Panc1 (cell line): ENCODE measurements at regions of chr17 and their contacts with region 1.

Region 1: DNA sequence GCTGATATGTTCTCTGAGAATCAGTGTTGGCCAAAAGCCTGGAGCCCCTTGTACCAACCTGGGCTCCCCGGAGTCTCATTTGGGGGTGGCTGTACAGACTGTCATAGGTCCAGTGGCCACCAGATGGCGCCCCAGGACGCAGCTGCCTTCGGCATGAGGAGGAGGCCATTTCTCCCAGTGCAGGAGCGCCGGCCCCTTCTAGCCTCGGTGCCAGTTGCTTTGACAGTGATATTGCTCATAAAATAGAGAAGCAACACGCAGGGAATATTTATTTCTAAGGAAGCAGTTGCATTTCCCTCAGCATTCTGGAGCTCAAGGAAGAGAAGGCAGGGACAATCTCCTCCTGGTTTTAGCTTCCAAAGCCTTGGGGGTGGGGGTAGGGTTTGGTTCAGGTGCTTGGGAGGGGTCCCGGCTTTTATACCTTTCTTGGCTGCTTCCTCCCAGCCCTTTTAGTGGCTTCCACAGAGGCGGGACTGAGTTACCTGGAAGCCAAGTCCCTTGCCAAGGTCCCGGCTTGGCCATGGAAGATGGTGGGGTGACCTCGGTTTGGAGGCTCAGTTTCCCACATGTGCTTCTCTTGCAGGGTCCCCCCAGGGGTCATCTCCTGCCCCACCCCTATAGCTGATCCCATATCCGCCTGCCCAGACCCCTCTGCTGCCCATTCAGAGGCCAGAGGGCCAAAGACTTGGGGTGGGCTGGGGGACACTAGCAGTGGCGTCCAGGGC is 117.8 kb upstream of the CDC42EP4 start:
- DNase-seq: peak; percentile 20
- ATAC-seq: peak; percentile 93
- H3K4me3 ChIP-seq: no peak overlapping the region
- H3K27ac ChIP-seq: no peak overlapping the region
- H3K4me1 ChIP-seq: no peaks in the 10 kb centered on the region
- H3K27me3 ChIP-seq: peaks cover 5% of the 10 kb centered on the region
- CTCF ChIP-seq: peak; percentile 98

Region 2: DNA sequence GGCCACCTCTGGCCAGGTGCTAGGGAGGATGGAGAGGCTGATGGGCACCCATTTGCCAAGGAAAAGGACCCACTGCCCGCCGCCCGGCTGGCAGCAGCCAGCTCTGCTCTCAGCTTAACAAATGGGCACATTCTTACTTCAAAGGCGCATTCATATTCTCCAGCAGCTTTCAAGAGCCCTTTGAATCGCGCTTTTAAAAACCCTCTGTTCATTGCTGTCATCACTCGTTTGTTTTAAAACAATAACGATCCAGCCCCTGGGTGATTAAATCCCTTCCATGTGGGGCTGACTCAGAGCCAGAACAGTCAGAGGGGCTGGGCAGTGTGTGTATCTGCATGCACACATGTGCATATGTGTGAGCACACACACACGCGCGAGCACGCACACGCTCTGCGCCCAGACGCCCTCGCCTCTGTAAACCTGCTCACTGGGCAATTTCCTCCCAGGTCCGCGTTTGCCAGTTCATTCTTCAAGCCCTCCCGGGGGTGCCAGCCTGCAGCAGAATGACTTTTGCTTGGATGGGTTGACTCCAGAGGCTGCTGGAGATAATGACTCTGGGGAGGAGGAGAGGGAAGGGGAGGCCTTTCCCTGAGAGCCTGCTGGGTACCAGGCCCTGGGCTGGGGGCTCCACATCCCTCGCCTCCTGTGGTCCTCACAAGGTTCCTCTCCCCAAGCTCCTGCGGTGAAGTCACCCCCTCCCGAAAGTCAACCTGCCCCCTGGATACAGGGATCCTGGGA is 81.5 kb after region 1 on chr17:
- CTCF ChIA-PET with region 1: no interaction called
- POLR2A ChIA-PET with region 1: no interaction called
- in situ Hi-C with region 1: no loop called
- intact Hi-C with region 1: no loop called
- DNase-seq: no peak
- ATAC-seq: no peak
- H3K4me3 ChIP-seq: no peak overlapping the region
- H3K27ac ChIP-seq: no peak overlapping the region
- H3K4me1 ChIP-seq: no peaks in the 10 kb centered on the region
- H3K27me3 ChIP-seq: peaks cover 6% of the 10 kb centered on the region
- CTCF ChIP-seq: no peak

Region 3: GRCh38 chr17:73645050-73645978 is 215.7 kb after region 1 on chr17:
- CTCF ChIA-PET with region 1: interaction called, 3 read pairs
- POLR2A ChIA-PET with region 1: no interaction called
- in situ Hi-C with region 1: no loop called
- intact Hi-C with region 1: loop called (anchors 10 kb)
- DNase-seq: no peak
- ATAC-seq: peak; percentile 66
- H3K4me3 ChIP-seq: peak overlapping the region in 1 of 2 experiments; percentile 38; a peak in 2 of 4 replicates
- H3K27ac ChIP-seq: no peak overlapping the region
- H3K4me1 ChIP-seq: peaks cover 6% of the 10 kb centered on the region
- H3K27me3 ChIP-seq: peaks cover 45% of the 10 kb centered on the region
- CTCF ChIP-seq: peak; percentile 69

Region 4: DNA sequence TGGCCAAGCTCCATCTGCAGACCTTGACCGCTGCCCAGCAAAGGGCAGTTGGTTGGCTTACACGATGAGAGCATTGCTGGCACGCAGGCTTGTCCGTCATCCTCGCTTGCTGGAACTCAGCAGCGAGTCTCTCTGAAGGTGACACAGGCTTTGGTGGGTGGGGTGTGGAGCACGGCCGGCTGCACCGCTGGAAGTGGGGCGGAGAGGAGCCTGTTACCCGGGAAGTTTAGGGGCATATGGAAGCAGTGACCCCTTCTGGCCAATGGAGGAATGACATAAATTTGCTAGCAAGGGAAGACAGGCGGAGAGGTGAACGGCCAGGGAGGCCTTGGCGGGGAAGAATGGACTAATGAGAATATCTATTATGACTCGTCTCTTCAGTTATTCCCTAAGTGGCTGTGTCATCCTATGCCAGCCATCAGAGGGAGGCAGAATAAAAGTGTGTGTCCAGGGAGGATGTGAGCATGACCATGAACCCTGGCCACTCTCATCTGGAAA is 280.5 kb after region 1 on chr17:
- CTCF ChIA-PET with region 1: interaction called, 4 read pairs
- POLR2A ChIA-PET with region 1: no interaction called
- in situ Hi-C with region 1: no loop called
- intact Hi-C with region 1: loop called (anchors 2 kb)
- DNase-seq: peak; percentile 28
- ATAC-seq: peak; percentile 86
- H3K4me3 ChIP-seq: no peak overlapping the region
- H3K27ac ChIP-seq: no peak overlapping the region
- H3K4me1 ChIP-seq: no peaks in the 10 kb centered on the region
- H3K27me3 ChIP-seq: peaks cover 22% of the 10 kb centered on the region
- CTCF ChIP-seq: peak; percentile 93

Region 5: DNA sequence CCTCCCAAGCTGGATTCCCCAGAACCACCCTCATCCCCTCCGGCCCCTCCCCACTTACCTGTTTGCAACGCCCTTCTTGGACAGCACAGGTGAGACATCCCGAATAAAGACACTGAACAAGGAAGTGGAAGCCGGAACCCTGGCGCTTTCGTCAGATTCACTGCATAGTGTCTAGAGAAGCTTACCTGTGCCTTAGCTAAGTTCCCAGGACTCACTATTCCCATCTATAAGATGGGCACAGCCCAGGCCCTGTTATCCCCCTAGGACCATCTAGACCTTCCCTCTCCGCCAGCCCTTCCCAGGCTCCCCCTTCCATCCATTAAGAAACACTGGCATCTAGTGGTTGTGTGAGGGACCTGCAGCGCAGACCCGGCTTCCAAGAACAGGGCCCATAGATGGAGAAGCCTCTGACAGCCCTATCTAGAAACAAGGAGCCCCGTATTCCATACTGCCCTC is 747.0 kb after region 1 on chr17:
- CTCF ChIA-PET with region 1: interaction called, 10 read pairs
- POLR2A ChIA-PET with region 1: no interaction called
- in situ Hi-C with region 1: no loop called
- intact Hi-C with region 1: loop called (anchors 2 kb)
- DNase-seq: no peak
- ATAC-seq: peak; percentile 93
- H3K4me3 ChIP-seq: no peak overlapping the region
- H3K27ac ChIP-seq: no peak overlapping the region
- H3K4me1 ChIP-seq: no peaks in the 10 kb centered on the region
- H3K27me3 ChIP-seq: peaks cover 20% of the 10 kb centered on the region
- CTCF ChIP-seq: peak; percentile 92